MCF 10A (cell line): ENCODE measurements at regions of chr2 and their contacts with region 1.

Region 1: GRCh38 chr2:112726497-112727190 is 5.8 kb downstream of the NT5DC4 start:
- DNase-seq: peak; percentile 94
- H3K4me3 Mint-ChIP-seq: no peak overlapping the region
- H3K27ac Mint-ChIP-seq: no peak overlapping the region
- H3K4me1 Mint-ChIP-seq: no peaks in the 10 kb centered on the region
- H3K27me3 Mint-ChIP-seq: no peaks in the 10 kb centered on the region
- CTCF ChIP-seq: peak; percentile 98

Region 2: GRCh38 chr2:112593736-112594510 is 132.7 kb before region 1 on chr2:
- CTCF ChIA-PET with region 1: interaction called, 210 read pairs
- POLR2A ChIA-PET with region 1: interaction called, 4 read pairs
- intact Hi-C with region 1: no loop called
- DNase-seq: no peak
- H3K4me3 Mint-ChIP-seq: no peak overlapping the region
- H3K27ac Mint-ChIP-seq: peak overlapping the region; percentile 55
- H3K4me1 Mint-ChIP-seq: no peaks in the 10 kb centered on the region
- H3K27me3 Mint-ChIP-seq: no peaks in the 10 kb centered on the region
- CTCF ChIP-seq: no peak

Region 3: GRCh38 chr2:112626604-112627059 is 100.0 kb before region 1 on chr2:
- CTCF ChIA-PET with region 1: interaction called, 161 read pairs
- POLR2A ChIA-PET with region 1: interaction called, 53 read pairs
- intact Hi-C with region 1: loop called (anchors 1 kb)
- DNase-seq: peak; percentile 73
- H3K4me3 Mint-ChIP-seq: peak overlapping the region; percentile 58
- H3K27ac Mint-ChIP-seq: peak overlapping the region; percentile 93
- H3K4me1 Mint-ChIP-seq: peaks cover 58% of the 10 kb centered on the region
- H3K27me3 Mint-ChIP-seq: no peaks in the 10 kb centered on the region
- CTCF ChIP-seq: peak; percentile 85

Region 4: GRCh38 chr2:112658820-112659667 is 67.6 kb before region 1 on chr2:
- CTCF ChIA-PET with region 1: interaction called, 5 read pairs
- POLR2A ChIA-PET with region 1: interaction called, 6 read pairs
- intact Hi-C with region 1: loop called (anchors 2 kb)
- DNase-seq: peak; percentile 49
- H3K4me3 Mint-ChIP-seq: no peak overlapping the region
- H3K27ac Mint-ChIP-seq: peak overlapping the region; percentile 37
- H3K4me1 Mint-ChIP-seq: peaks cover 11% of the 10 kb centered on the region
- H3K27me3 Mint-ChIP-seq: no peaks in the 10 kb centered on the region
- CTCF ChIP-seq: no peak

Region 5: DNA sequence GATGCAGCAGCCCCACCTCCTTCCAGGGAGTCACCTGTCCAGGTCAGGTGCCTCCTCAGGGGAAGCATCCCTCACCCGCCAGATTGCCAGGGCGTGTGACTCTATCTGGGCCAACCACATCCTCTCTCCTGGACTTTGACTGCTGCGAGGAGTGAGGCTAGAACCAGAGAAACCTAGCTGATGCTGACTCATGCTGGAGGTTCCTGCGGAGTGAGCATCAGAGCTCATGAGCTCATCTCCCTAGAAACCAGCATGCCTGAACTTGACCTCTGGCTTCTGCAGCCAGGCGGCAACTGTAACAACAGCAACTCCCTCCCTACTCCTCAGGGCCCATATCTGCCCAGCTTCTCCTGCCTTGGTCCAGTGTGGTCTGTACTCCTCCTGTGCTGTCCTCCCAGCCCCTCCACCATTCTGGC is 34.1 kb before region 1 on chr2:
- CTCF ChIA-PET with region 1: interaction called, 20 read pairs
- POLR2A ChIA-PET with region 1: interaction called, 15 read pairs
- intact Hi-C with region 1: no loop called
- DNase-seq: peak; percentile 98
- H3K4me3 Mint-ChIP-seq: peak overlapping the region; percentile 7
- H3K27ac Mint-ChIP-seq: peak overlapping the region; percentile 86
- H3K4me1 Mint-ChIP-seq: peaks cover 22% of the 10 kb centered on the region
- H3K27me3 Mint-ChIP-seq: no peaks in the 10 kb centered on the region
- CTCF ChIP-seq: no peak

Region 6: DNA sequence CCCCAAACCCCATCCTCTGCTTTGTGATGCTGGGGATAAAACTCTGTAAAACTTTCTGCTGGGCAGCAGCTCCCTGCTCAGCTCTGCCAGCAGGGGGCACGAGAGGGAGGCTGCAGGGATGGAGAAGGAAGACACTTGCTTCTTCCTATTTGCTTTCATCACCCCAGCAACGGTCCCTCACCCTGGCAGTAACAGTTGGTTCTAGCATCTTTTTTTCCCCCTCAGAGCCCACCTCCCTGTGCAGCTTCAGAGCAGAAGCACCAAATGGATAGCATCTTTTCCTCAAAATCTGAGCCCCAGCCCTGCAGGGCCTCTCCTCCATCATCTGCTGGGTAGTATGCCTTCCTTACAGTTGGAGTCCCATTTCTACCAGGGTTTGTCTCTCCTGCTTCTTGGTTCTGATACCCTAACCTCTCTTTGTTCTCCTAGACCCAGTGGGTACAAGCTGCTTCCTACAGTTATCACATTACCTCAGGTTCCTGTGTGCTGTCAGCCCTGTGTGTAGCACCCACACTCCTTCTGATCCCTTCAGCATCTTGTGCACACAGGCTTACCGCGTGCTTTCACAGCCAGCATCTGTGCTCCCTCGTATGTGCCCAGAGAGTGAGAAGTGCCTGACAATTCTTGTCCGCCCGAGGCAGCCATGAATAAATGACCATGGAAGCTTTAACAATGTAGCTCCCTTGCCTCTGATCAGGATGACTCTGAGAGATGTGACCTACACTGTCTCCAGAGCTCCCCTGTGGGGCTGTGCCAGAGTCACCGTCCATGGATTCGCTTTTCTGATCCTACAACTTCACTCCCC is 23.3 kb after region 1 on chr2:
- CTCF ChIA-PET with region 1: interaction called, 10 read pairs
- POLR2A ChIA-PET with region 1: no interaction called
- intact Hi-C with region 1: no loop called
- DNase-seq: peak; percentile 70
- H3K4me3 Mint-ChIP-seq: no peak overlapping the region
- H3K27ac Mint-ChIP-seq: peak overlapping the region; percentile 74
- H3K4me1 Mint-ChIP-seq: peaks cover 23% of the 10 kb centered on the region
- H3K27me3 Mint-ChIP-seq: no peaks in the 10 kb centered on the region
- CTCF ChIP-seq: peak; percentile 86